ENCODE measurements at regions of chr3 and their contacts with region 1.

Region 1: GRCh38 chr3:139329345-139329850 is 14.4 kb upstream of the MRPS22 start:
- DNase-seq: peak; percentile 68 to 92 (median 85)
- ATAC-seq: peak; percentile 96
- H3K4me3 ChIP-seq: peak overlapping the region; percentile 21 to 36
- H3K4me3 Mint-ChIP-seq: peak overlapping the region; percentile 69
- H3K27ac ChIP-seq: no peak overlapping the region
- H3K27ac Mint-ChIP-seq: no peak overlapping the region
- H3K4me1 ChIP-seq: peaks cover 9% of the 10 kb centered on the region
- H3K4me1 Mint-ChIP-seq: peaks cover 17% of the 10 kb centered on the region
- H3K27me3 ChIP-seq: peaks cover 3 to 4% of the 10 kb centered on the region in 2 experiments
- H3K27me3 Mint-ChIP-seq: peaks cover 34% of the 10 kb centered on the region
- CTCF ChIP-seq: peak; percentile 95

Region 2: DNA sequence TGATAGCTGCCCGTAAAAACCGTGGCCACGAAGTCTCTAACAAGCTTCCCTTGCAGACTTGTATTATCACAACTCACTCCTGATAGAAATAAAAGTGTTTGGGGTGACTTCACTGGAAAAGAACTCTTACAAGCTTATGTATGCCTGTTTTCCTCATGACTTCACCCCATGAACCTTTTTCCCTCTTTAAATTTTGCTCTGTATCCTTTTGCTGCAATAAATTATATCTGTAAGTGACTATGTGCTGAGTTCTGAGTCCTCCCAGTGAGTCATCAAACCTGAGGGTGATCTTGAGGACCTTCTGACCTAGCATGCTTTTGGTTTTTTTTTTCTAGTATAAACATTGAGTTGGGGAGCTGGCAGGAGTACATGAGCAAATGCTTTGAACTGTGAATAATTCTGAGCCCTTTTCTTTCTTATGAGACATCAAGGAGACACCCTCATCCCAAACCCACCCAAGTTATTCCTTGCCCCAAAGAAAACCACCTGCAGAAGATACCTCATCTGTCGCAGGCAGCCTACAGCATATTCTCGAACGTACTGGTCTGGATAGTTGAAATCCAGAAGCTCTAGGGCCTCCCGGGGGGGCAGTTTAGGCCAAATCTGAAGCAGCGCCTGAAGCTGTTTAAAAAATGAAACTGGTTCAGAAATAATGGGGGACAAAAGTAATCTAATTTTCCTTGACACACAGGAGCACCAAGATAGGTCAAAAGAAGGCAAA is 635.0 kb before region 1 on chr3:
- CTCF ChIA-PET with region 1: no interaction called
- POLR2A ChIA-PET with region 1: no interaction called
- intact Hi-C with region 1: loop called in 1 of 2 experiments (anchors 2 kb)
- DNase-seq: no peak
- ATAC-seq: no peak
- H3K4me3 ChIP-seq: no peak overlapping the region
- H3K4me3 Mint-ChIP-seq: no peak overlapping the region
- H3K27ac ChIP-seq: no peak overlapping the region
- H3K27ac Mint-ChIP-seq: no peak overlapping the region
- H3K4me1 ChIP-seq: no peaks in the 10 kb centered on the region
- H3K4me1 Mint-ChIP-seq: no peaks in the 10 kb centered on the region
- H3K27me3 ChIP-seq: no peaks in the 10 kb centered on the region
- H3K27me3 Mint-ChIP-seq: no peaks in the 10 kb centered on the region
- CTCF ChIP-seq: no peak

Region 3: DNA sequence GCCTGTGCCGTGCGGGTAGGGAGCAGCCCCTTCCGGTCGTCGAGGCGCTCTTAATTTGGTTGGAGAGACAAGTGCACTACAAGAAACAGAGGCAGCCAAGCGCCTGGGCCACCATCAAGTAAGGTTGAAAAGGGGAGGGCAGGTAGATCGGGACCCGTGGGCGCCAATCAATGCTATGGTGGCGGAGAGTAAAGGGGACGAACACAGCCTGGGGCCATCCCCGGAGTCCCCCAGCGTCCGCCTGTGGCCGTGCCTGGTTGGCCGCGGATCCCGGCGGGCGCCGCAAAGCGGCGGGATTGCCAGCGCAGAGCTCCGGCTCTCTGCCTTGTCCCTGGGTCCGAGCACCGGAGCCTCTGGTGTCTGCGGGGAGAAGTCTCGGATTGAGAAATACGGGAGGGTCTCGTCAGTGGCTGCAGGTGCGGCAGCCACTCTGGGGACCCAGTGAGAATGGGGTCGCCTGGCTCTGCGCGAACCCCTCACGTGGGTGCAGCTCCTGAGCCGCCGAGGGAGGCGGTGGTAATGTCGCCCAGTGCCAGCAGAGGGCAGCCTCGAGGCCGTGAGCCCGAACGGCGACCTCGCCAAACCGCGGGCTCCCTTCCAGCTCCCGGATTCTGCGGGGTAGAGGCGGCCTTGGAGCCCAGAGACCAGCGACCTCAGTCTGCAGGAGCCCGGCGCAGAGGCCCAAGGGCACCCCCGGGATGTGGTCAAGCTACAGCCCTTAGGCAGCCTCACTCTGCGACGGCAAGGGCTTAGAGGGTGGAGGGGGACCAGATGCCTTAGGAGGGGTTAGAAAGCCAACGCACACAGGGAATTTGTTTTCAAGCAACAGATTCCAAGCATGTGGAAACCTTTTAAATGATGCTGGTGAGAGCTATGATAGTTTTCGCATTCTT is 393.3 kb before region 1 on chr3:
- CTCF ChIA-PET with region 1: interaction called, 9 read pairs
- POLR2A ChIA-PET with region 1: no interaction called
- intact Hi-C with region 1: loop called (anchors 1 kb)
- DNase-seq: peak; percentile 41 to 80 (median 72)
- ATAC-seq: peak; percentile 89
- H3K4me3 ChIP-seq: peak overlapping the region; percentile 33 to 50
- H3K4me3 Mint-ChIP-seq: peak overlapping the region; percentile 75
- H3K27ac ChIP-seq: no peak overlapping the region
- H3K27ac Mint-ChIP-seq: no peak overlapping the region
- H3K4me1 ChIP-seq: peaks cover 46% of the 10 kb centered on the region
- H3K4me1 Mint-ChIP-seq: peaks cover 29% of the 10 kb centered on the region
- H3K27me3 ChIP-seq: peaks cover 24 to 44% of the 10 kb centered on the region in 2 experiments
- H3K27me3 Mint-ChIP-seq: peaks cover 64% of the 10 kb centered on the region
- CTCF ChIP-seq: peak; percentile 90

Region 4: GRCh38 chr3:139111392-139112229 is 217.8 kb before region 1 on chr3:
- CTCF ChIA-PET with region 1: interaction called, 39 read pairs
- POLR2A ChIA-PET with region 1: no interaction called
- intact Hi-C with region 1: loop called in 1 of 2 experiments (anchors 2 kb)
- DNase-seq: peak; percentile 7 to 63 (median 49)
- ATAC-seq: no peak
- H3K4me3 ChIP-seq: no peak overlapping the region
- H3K4me3 Mint-ChIP-seq: no peak overlapping the region
- H3K27ac ChIP-seq: no peak overlapping the region
- H3K27ac Mint-ChIP-seq: no peak overlapping the region
- H3K4me1 ChIP-seq: no peaks in the 10 kb centered on the region
- H3K4me1 Mint-ChIP-seq: peaks cover 9% of the 10 kb centered on the region
- H3K27me3 ChIP-seq: no peaks in the 10 kb centered on the region
- H3K27me3 Mint-ChIP-seq: peaks cover 10% of the 10 kb centered on the region
- CTCF ChIP-seq: peak; percentile 58